A549 (cell line): ENCODE measurements at regions of chr10 and their contacts with region 1.

Region 1: DNA sequence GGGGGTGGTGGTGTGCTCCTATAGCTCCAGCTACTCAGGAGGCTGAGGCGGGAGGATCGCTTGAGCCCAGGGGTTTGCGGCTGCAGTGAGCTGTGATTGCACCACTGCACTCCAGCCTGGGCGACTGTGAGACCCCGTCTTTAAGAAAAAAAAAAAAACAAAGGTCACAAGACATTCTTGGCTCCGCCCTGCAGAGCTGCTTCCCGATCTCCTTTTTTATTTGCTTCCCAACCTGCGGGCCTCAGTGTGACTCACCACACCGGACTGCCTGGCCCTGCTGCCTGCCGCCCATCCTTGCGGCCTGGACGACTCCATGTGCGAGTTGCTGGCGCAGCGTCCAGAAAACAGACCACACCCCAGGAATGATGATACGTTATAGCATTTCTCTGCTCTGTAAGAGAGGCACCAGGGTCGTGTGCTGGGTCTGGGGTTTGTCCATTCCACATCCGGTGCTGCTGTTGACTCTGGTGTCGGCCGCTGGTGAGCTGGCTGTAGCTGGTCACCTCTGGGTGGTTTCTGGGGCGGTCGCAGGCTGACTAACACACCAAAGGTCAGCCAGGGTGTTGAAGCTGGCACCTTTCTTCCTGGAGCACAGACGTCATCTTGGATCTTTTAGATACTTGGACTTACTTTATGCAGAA is 123.6 kb downstream of the TCF7L2 start:
- DNase-seq: peak; percentile 92 to 99
- ATAC-seq: peak; percentile 96 to 97
- H3K4me3 ChIP-seq: peak overlapping the region; percentile 22; the same call in 1 of the 3 replicates
- H3K27ac ChIP-seq: peak overlapping the region; percentile 92
- H3K4me1 ChIP-seq: peaks cover 73% of the 10 kb centered on the region
- CTCF ChIP-seq: 0 out of 3 replicates have a peak, but pooled peaks have one; percentile 5
- EP300 ChIP-seq: peak; percentile 91 to 96; a peak in 4 of 5 replicates
- POLR2A ChIP-seq: no peak; the same call in 1 of the 2 replicates
- RAD21 ChIP-seq: peak in 1 of 2 experiments; percentile 61; a peak in 2 of 5 replicates

Region 2: GRCh38 chr10:112949875-112950507 is 123.7 kb before region 1 on chr10 and contains the start of gene TCF7L2:
- CTCF ChIA-PET with region 1: no interaction called
- POLR2A ChIA-PET with region 1: interaction called, 20 read pairs
- DNase-seq: peak; percentile 94 to 98
- ATAC-seq: peak; percentile 70 to 88
- H3K4me3 ChIP-seq: peak within 1 kb of the TSS; percentile 84
- H3K27ac ChIP-seq: peak within 1 kb of the TSS; percentile 98 to 99
- H3K4me1 ChIP-seq: peaks cover 27% of the 10 kb centered on the region
- CTCF ChIP-seq: no peak
- EP300 ChIP-seq: no peak
- POLR2A ChIP-seq: no peak
- RAD21 ChIP-seq: peak; percentile 13 to 48; a peak in 4 of 5 replicates
- polyA plus RNA-seq, gene TCF7L2: 11.3 and 15.8 TPM in 2 replicates

Region 3: GRCh38 chr10:112958275-112958995 is 115.2 kb before region 1 on chr10:
- CTCF ChIA-PET with region 1: interaction called, 6 read pairs
- POLR2A ChIA-PET with region 1: interaction called, 25 read pairs
- DNase-seq: peak in 1 of 2 experiments; percentile 60
- ATAC-seq: peak in 1 of 2 experiments; percentile 60; a peak in 3 of 6 replicates
- H3K4me3 ChIP-seq: peak overlapping the region; percentile 20
- H3K27ac ChIP-seq: peak overlapping the region; percentile 88 to 98
- H3K4me1 ChIP-seq: peaks cover 86% of the 10 kb centered on the region
- CTCF ChIP-seq: no peak
- EP300 ChIP-seq: no peak
- POLR2A ChIP-seq: no peak
- RAD21 ChIP-seq: no peak

Region 4: DNA sequence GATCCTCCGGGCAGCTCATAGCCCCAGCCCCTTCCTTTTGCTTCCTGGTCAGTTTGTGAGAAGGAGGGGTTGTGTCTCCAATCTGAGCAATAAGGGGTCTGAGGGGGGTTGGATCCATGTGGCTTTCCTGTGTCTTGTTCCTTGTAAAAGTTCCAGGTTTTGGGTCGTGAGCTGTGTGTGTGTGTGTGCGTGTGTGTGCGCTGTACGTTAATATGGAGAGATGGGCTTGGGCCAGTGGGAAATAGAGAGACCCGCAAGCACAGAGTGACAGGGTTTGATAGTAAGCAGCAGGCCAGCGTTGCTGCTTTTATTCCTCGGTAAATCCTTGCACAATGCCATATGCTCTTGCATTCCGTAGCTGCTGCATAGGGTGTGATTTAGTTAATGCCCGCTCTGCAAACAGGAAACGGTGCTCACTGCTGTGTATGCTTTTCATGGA is 15.1 kb before region 1 on chr10:
- CTCF ChIA-PET with region 1: interaction called, 5 read pairs
- POLR2A ChIA-PET with region 1: interaction called, 40 read pairs
- DNase-seq: peak in 1 of 2 experiments; percentile 64
- ATAC-seq: peak; percentile 75 to 77
- H3K4me3 ChIP-seq: peak overlapping the region; percentile 23; the same call in 2 of the 3 replicates
- H3K27ac ChIP-seq: peak overlapping the region; percentile 78 to 89
- H3K4me1 ChIP-seq: peaks cover 93% of the 10 kb centered on the region
- CTCF ChIP-seq: no peak
- EP300 ChIP-seq: no peak
- POLR2A ChIP-seq: no peak
- RAD21 ChIP-seq: no peak

Region 5: DNA sequence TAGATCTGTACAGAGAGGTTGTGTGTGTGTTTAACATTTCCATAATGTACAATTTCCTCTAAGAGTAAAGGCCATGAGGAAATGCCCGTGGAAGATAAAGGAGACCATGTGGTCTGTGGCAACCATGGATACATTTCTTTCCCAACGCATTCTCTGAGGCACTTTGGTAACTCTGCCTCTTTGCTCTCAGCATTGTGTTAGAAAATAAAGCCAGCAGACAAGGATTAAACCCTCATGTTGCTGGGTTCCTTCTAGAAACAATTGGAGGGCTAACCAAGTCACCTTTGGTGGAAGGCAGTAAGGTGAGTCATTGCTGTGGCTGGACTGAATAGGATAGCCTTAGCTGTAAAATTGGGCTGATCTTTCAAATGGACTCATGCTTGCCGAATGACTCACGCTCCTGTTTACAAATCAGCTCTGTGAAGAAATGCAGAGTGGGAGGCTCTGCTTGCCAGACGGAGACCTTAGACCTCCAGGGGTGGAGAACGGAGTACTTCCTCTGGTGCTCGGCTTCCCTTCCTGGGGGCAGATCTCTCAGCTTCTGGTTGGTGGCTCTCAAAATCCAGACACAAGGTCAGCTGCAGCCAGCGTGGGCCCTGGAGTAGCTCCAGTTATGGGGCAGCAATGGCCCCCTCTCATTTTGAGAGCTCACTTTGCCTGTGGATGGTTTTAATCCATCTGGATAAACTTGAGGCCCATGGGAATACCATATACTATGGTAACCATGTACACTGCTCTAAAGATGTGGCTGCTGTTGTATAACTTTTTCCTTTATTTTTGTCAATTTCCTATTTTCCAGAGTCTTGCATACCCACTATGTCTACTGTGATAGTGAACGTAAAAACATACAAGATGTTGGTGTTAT is 13.7 kb after region 1 on chr10:
- CTCF ChIA-PET with region 1: interaction called, 15 read pairs
- POLR2A ChIA-PET with region 1: interaction called, 23 read pairs
- DNase-seq: peak; percentile 97 to 98
- ATAC-seq: peak; percentile 95
- H3K4me3 ChIP-seq: no peak overlapping the region
- H3K27ac ChIP-seq: peak overlapping the region; percentile 88 to 92
- H3K4me1 ChIP-seq: peaks cover 80% of the 10 kb centered on the region
- CTCF ChIP-seq: no peak
- EP300 ChIP-seq: peak; percentile 89 to 92
- POLR2A ChIP-seq: no peak
- RAD21 ChIP-seq: peak; percentile 34 to 63

Region 6: DNA sequence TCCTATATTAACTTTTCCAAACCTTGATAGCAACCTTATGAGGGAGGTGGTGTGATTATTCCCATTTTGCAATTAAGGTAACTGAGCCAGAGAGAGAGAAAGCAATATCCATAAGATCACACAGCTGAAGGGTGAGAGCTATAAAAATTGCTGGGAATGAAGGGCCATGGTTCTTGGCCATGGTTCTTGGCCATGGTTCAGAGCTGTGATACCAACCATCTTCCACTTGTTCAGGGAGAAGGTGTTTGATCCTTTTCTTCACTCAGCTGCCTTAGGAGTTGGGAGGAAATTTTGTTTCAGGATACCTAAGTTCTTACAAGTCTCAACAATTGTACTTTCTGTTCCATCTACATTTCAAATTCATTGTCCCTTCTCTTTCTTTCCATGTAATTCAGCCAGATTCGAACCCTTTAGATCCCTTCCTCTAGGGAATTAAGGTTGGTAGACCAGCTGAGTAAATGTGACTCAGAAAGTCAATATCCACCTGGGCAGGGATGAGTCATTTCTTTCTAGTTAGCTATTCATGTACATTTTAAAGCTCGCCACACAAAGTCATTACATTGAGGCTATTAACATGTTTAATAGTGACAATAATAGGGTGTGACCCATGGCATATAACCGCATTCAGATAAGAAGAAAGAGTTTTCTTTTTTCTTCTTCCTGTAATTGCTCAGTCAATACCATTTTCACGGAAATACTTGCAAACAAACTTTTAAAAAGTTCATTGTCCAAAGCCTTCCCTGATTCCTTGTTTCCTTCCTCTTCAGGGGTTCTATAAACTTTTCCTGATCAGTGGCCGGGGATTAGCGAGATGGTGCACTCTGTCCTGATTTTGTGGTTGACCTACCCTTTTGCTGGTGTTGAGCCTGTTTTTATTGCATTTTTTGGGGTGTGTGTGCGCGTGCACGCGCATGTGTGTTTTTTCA is 19.8 kb after region 1 on chr10:
- CTCF ChIA-PET with region 1: interaction called, 4 read pairs
- POLR2A ChIA-PET with region 1: interaction called, 23 read pairs
- DNase-seq: peak; percentile 68 to 76
- ATAC-seq: peak; percentile 64 to 66; a peak in 5 of 6 replicates
- H3K4me3 ChIP-seq: 0 out of 3 replicates have a peak overlapping the region, but pooled peaks have one; percentile 7
- H3K27ac ChIP-seq: peak overlapping the region; percentile 80 to 89
- H3K4me1 ChIP-seq: peaks cover 66% of the 10 kb centered on the region
- CTCF ChIP-seq: no peak
- EP300 ChIP-seq: peak; percentile 27 to 39; a peak in 2 of 5 replicates
- POLR2A ChIP-seq: no peak
- RAD21 ChIP-seq: peak in 1 of 2 experiments; percentile 23; a peak in 2 of 5 replicates